GM10248 (cell line): ENCODE measurements at regions of chr1 and their contacts with region 1.

Region 1: GRCh38 chr1:245045087-245045881 is 109.5 kb upstream of the KIF26B start:
- DNase-seq: no peak
- CTCF ChIP-seq: no peak

Region 2: GRCh38 chr1:244796718-244797406 is 248.4 kb before region 1 on chr1:
- CTCF ChIA-PET with region 1: interaction called, 79 read pairs
- POLR2A ChIA-PET with region 1: no interaction called
- DNase-seq: peak; percentile 50
- CTCF ChIP-seq: peak; percentile 63

Region 3: GRCh38 chr1:244835276-244836134 is 209.8 kb before region 1 on chr1 and contains the start of gene COX20:
- CTCF ChIA-PET with region 1: interaction called, 11 read pairs
- POLR2A ChIA-PET with region 1: no interaction called
- DNase-seq: peak; percentile 83
- CTCF ChIP-seq: no peak

Region 4: DNA sequence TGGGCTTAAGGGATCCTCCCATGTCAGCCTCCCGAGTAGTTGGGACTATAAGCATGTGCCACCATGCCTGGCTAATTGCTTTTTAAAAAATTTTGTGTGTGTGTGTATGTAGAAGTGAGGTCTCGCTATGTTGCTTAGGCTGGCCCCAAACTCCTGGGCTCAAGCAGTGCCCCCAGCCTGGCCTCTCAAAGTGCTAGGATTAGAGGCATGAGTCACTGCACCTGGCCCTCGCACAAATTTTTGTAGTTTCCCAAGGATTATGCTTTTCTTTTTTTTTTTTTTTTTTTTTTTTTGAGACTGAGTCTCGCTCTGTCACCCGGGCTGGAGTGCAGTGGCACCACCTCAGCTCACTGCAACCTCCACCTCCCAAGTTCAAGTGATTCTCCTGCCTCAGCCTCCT is 36.5 kb before region 1 on chr1:
- CTCF ChIA-PET with region 1: interaction called, 14 read pairs
- POLR2A ChIA-PET with region 1: no interaction called
- DNase-seq: no peak
- CTCF ChIP-seq: no peak

Region 5: DNA sequence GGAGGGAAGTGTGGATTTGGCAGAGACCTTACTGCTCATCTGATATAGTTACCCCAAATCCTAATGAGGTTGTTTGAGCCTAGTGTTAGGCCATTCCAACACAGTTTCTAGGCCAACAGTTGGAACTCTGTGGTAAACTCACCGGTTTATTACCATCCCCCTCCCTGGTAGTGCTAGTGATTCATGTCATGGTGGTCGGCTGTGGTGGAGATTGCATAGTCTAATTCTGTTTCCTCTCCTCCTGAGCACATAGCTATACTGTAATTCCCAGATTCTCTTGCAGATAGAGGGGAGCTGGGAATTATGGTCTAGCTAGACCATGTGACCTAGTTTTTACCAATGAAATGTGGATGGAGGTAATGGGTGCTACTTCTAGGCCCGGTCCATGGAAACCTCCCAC is 14.2 kb before region 1 on chr1:
- CTCF ChIA-PET with region 1: interaction called, 37 read pairs
- POLR2A ChIA-PET with region 1: no interaction called
- DNase-seq: no peak
- CTCF ChIP-seq: no peak